Upper lobe of right lung (tissue), 1 donor: ENCODE measurements at regions of chr2 and their contacts with region 1.

Region 1: DNA sequence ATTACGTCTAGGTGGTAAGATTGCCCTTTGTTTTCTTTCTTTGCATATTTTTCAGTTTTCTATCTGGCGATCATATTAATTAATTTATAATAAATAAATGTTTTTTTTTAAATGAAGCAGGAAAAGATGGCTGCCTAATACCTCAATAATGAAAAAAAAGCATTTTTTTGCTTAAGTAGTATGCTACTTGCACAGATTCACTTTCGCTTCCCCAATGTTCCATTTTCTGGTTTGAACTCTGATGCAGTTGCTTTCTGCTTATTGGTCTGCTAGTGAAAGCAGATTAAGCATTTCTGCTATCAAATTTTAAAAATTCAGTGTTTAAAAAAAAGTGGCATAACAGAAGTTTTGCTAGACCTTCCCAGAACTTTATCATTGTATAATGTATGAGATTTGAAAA is 11.9 kb upstream of the TMEM182 start:
- DNase-seq: no peak
- ATAC-seq: no peak
- H3K4me3 ChIP-seq: no peak overlapping the region
- H3K27ac ChIP-seq: no peak overlapping the region
- H3K4me1 ChIP-seq: no peaks in the 10 kb centered on the region
- H3K27me3 ChIP-seq: no peaks in the 10 kb centered on the region
- CTCF ChIP-seq: no peak

Region 2: GRCh38 chr2:102639429-102639828 is 110.5 kb before region 1 on chr2:
- intact Hi-C with region 1: no loop called
- DNase-seq: no peak
- ATAC-seq: no peak
- H3K4me3 ChIP-seq: no peak overlapping the region
- H3K27ac ChIP-seq: no peak overlapping the region
- H3K4me1 ChIP-seq: no peaks in the 10 kb centered on the region
- H3K27me3 ChIP-seq: no peaks in the 10 kb centered on the region
- CTCF ChIP-seq: no peak

Region 3: GRCh38 chr2:102796337-102796736 is 46.4 kb after region 1 on chr2:
- intact Hi-C with region 1: loop called (anchors 5 kb)
- DNase-seq: no peak
- ATAC-seq: no peak
- H3K4me3 ChIP-seq: no peak overlapping the region
- H3K27ac ChIP-seq: no peak overlapping the region
- H3K4me1 ChIP-seq: no peaks in the 10 kb centered on the region
- H3K27me3 ChIP-seq: no peaks in the 10 kb centered on the region
- CTCF ChIP-seq: no peak